PC-3 (cell line): ENCODE measurements at regions of chr10 and their contacts with region 1.

Region 1: DNA sequence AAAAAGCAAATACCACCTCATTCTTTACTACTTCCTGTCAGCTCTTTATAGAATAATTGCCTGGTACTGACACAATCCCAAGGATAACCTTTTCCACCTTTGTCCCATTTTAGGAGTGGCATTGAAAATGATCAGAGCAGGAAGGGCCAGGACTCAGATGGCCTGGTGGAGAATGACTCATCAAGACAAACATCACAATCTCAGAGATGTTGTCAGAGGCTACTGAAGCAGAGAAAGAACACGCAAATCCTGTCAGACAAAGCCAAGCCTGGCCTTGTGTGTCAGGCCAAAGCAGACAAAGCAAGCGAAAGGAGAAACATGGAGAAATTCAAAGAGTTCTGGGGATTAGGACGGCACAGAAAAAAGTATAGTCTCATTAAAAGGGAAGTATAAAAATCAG is 40.9 kb downstream of the NSUN6 start:
- DNase-seq: peak; percentile 87
- ATAC-seq: peak; percentile 80
- H3K4me3 ChIP-seq: peak overlapping the region; percentile 37; the same call in 1 of the 2 replicates
- H3K27ac ChIP-seq: peak overlapping the region; percentile 98
- H3K4me1 ChIP-seq: peaks cover 74% of the 10 kb centered on the region
- H3K27me3 ChIP-seq: no peaks in the 10 kb centered on the region
- CTCF ChIP-seq: no peak

Region 2: GRCh38 chr10:18400201-18400905 is 210.2 kb before region 1 on chr10:
- CTCF ChIA-PET with region 1: no interaction called
- POLR2A ChIA-PET with region 1: no interaction called
- intact Hi-C with region 1: no loop called
- DNase-seq: no peak
- ATAC-seq: no peak
- H3K4me3 ChIP-seq: no peak overlapping the region
- H3K27ac ChIP-seq: no peak overlapping the region
- H3K4me1 ChIP-seq: no peaks in the 10 kb centered on the region
- H3K27me3 ChIP-seq: peaks cover 37% of the 10 kb centered on the region
- CTCF ChIP-seq: no peak

Region 3: GRCh38 chr10:18651324-18652007 is 40.9 kb after region 1 on chr10 and contains the start of gene NSUN6:
- CTCF ChIA-PET with region 1: no interaction called
- POLR2A ChIA-PET with region 1: no interaction called
- intact Hi-C with region 1: loop called (anchors 2 kb)
- DNase-seq: peak; percentile 73
- ATAC-seq: peak; percentile 94
- H3K4me3 ChIP-seq: peak within 1 kb of the TSS; percentile 75
- H3K27ac ChIP-seq: peak within 1 kb of the TSS; percentile 67
- H3K4me1 ChIP-seq: no peaks in the 10 kb centered on the region
- H3K27me3 ChIP-seq: no peaks in the 10 kb centered on the region
- CTCF ChIP-seq: no peak
- total RNA-seq, gene NSUN6: 6.0 and 6.5 TPM in 2 replicates

Region 4: DNA sequence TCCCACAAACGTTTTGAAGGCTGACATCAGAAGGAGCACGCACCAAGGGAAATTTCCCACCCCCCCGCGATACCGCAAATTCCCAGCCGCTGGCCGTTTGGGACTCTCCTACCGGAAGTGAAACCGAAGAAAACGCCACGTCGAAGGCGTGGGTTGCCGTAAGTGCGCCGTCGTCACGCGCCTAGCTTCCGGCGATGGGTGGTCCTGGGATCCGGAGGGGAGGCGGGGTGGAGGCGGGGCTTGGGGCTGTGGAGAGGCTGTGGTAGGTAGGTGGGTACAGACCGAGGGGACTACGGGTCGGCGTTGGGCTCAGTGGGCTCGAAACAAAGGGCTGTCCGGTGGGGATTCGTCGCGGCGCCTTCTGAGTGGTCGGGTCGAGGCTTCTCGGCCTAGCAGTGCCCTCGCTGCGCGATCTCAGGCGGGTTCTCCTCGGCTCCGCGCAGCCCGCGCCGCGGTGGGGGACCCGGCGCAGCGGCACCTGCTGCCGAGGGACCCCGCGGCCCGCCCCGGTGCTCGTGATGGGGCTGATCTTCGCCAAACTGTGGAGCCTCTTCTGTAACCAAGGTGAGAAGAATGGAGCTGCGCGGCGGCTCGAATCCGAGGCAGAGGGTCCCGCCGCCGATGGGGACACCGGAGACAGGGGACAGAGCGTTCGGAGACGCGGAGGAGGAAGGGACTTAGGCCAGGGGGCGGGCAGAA is 48.8 kb after region 1 on chr10 and contains the start of gene ARL5B:
- CTCF ChIA-PET with region 1: no interaction called
- POLR2A ChIA-PET with region 1: interaction called, 7 read pairs
- intact Hi-C with region 1: loop called (anchors 2 kb)
- DNase-seq: peak; percentile 92
- ATAC-seq: peak; percentile 94
- H3K4me3 ChIP-seq: peak within 1 kb of the TSS; percentile 79
- H3K27ac ChIP-seq: peak within 1 kb of the TSS; percentile 79
- H3K4me1 ChIP-seq: peaks cover 18% of the 10 kb centered on the region
- H3K27me3 ChIP-seq: no peaks in the 10 kb centered on the region
- CTCF ChIP-seq: no peak
- total RNA-seq, gene ARL5B: 8.1 and 10.1 TPM in 2 replicates